ENCODE measurements at regions of chr11 and their contacts with region 1.

Region 1: GRCh38 chr11:72091005-72091691 is 10.5 kb downstream of the LRRC51 start:
- DNase-seq: no peak
- H3K4me3 ChIP-seq: no peak overlapping the region
- CTCF ChIP-seq: peak; percentile 91

Region 2: GRCh38 chr11:71928737-71929452 is 162.3 kb before region 1 on chr11 and contains the start of gene RNF121:
- CTCF ChIA-PET with region 1: no interaction called
- POLR2A ChIA-PET with region 1: no interaction called
- DNase-seq: no peak
- H3K4me3 ChIP-seq: peak within 1 kb of the TSS; percentile 98
- CTCF ChIP-seq: no peak

Region 3: DNA sequence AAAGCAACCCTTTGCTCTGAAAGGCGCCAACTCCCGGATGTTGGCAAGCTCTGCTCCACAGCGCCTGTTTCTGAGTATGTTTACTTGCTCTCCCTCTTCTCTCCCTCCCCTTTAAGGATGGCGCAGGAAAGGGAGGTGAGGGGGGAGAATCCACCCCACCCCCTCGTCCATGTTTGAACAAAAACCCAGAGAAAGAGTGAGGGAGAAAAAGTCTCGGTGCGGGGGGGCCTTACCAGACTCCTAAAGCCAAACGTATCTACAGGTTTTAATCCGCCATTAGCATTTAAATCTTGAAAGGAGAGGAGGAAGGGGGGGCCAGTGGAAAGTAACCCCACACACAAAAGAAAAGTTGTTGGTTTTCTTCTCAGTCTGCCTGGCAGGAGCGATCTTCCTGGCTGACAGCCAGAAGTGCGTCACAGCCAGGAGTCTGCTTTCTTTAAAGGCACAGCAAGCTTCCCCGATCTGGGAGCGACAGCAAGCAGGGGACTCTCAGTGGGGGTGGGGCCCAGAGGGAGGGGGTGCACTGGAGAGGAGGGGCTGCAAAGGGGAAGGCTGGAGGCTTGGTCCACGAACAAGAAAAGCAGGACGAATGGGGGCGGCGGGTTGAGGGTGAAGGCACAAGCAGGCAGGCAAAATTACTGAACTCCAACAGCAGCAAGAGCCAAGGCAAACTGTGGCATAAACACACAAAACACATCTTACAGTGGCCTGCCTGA is 50.3 kb before region 1 on chr11:
- CTCF ChIA-PET with region 1: interaction called, 540 read pairs
- POLR2A ChIA-PET with region 1: interaction called, 3 read pairs
- DNase-seq: peak; percentile 77
- H3K4me3 ChIP-seq: peak overlapping the region; percentile 63
- CTCF ChIP-seq: no peak

Region 4: DNA sequence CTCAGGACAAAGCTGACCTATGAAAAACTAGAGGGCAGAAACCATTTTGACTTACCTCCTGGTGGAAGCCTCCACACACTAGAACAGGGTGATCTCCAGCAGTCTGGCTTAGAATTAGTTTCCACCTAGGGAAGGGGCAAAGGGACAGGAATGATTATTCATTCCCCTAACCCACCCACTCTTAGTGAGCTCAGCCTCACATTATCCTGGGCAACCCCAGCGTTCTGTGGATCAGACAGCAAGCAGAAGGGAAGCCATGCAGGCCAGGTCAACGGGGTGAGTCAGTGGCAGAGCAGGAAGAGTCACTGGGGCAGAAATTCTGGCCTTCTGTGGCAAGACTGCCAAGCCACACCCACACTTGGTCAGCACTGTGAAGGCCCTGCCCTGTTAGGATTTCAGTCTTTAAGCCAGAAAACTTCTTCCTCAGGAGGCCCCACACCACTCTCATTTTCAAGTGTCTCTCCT is 21.3 kb before region 1 on chr11:
- CTCF ChIA-PET with region 1: interaction called, 12 read pairs
- POLR2A ChIA-PET with region 1: no interaction called
- DNase-seq: no peak
- H3K4me3 ChIP-seq: peak overlapping the region; percentile 21
- CTCF ChIP-seq: no peak

Region 5: DNA sequence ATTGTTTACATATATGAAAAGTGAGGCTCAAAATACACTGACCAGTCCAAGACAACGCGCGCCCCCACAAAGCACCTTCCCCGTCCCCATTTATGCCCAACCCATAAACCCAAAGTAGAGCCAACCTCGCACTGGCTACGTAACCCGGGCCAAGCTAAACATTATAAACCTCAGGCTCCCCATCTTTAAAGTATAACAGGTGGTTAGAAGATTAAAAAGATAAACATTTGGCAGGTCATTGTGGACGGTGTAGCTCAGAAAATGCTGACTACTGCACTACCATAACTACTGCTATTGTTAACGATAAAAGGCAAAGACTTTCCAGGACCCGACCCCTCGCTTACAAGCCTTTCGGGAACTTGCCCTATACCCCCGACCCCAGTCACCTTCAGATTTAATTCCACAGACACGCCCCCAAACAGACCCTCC is 11.3 kb before region 1 on chr11:
- CTCF ChIA-PET with region 1: interaction called, 40 read pairs
- POLR2A ChIA-PET with region 1: interaction called, 5 read pairs
- DNase-seq: no peak
- H3K4me3 ChIP-seq: peak overlapping the region; percentile 71
- CTCF ChIP-seq: no peak

Region 6: DNA sequence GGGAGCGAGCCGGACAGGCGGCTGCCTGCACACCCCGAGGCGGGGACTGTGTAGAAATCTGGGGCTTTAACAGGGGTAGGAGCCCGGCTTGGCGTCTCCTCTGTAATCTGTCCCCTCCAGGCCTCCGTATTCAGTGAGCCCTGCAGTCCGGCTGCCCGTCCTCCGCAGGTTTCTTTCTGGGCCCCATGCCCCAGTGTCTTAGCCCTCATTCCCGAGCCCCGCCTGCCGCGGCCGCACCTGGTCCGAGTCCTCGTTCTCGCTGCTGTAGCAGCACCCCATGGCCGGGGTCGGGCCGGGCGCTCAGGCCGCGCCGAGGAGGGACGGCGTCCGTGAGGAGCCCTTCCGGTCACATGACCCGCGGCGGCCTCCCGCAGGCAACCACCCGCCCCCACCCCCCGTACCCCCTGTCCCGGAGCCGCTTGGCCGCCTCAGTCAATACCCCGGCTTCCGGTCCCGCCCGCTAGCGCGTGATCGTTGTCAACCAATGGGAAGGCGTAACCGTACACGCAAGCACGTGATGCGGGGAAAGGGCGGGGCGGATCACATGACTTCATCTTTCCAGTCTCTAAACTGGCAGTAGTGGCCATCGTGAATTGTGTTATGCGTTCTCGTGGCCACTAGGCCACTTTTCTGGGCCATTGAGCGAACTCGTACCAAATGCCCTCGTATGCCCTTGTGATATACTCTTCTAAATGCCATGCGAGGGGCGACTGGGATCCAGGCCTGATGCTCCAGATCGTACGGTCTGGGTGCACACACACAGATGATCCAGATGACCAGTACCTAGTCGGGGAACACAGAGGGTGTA is 12.0 kb after region 1 on chr11 and contains the start of gene LAMTOR1:
- CTCF ChIA-PET with region 1: interaction called, 77 read pairs
- POLR2A ChIA-PET with region 1: interaction called, 4 read pairs
- DNase-seq: peak; percentile 91
- H3K4me3 ChIP-seq: peak within 1 kb of the TSS; percentile 78
- CTCF ChIP-seq: peak; percentile 40

Region 7: DNA sequence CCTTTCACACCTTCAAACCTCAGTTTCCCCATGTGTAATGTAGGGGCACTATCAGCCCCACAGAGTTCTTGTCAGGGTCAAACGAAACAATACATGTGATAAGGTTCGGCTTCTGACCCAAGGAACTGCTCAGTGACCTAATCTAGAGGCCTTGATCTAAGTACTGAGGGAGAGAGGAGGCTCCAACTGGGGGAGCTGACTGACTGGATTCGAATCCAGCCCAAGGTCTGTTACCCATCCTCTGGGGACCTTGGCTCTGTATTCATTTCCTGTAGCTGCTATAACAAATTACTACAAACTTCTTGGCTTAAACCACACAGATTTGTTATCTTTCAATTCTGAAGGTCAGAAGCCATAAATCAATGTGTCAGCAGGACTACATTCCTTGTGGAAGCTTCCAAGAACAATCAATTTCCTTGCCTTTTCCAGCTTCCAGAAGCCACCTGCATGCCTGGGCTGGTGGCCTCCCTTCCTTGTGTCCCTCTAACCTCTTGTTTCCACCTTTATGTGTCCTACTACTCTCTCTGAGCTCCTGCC is 32.0 kb after region 1 on chr11:
- CTCF ChIA-PET with region 1: no interaction called
- POLR2A ChIA-PET with region 1: no interaction called
- DNase-seq: no peak
- H3K4me3 ChIP-seq: no peak overlapping the region
- CTCF ChIP-seq: no peak

Region 8: GRCh38 chr11:72263361-72263760 is 172.2 kb after region 1 on chr11:
- CTCF ChIA-PET with region 1: no interaction called
- POLR2A ChIA-PET with region 1: no interaction called
- DNase-seq: no peak
- H3K4me3 ChIP-seq: no peak overlapping the region
- CTCF ChIP-seq: no peak